Naive thymus-derived CD8-positive, alpha-beta T cell (primary cell): ENCODE measurements at regions of chr14 and their contacts with region 1.

Region 1: GRCh38 chr14:35404449-35405303 is at the start of gene NFKBIA:
- DNase-seq: peak; percentile 88 to 96 (median 92)
- ATAC-seq: peak; percentile 62 to 65
- H3K4me3 Mint-ChIP-seq: peak within 1 kb of the TSS; percentile 91 to 98 (median 94)
- H3K27ac Mint-ChIP-seq: peak within 1 kb of the TSS; percentile 95 to 100 (median 99)
- H3K4me1 Mint-ChIP-seq: peaks cover 32 to 64% (median 57%) of the 10 kb centered on the region in 4 donors
- H3K27me3 Mint-ChIP-seq: no peaks in the 10 kb centered on the region
- polyA plus RNA-seq, gene NFKBIA: 194 to 328 (median 198) TPM

Region 2: GRCh38 chr14:34982417-34983147 is 422.1 kb before region 1 on chr14 and contains the start of gene SRP54:
- POLR2A ChIA-PET with region 1: interaction called, 20 read pairs
- DNase-seq: peak; percentile 96 to 100 (median 100)
- ATAC-seq: peak; percentile 92
- H3K4me3 Mint-ChIP-seq: no peak within 1 kb of the TSS
- H3K27ac Mint-ChIP-seq: no peak within 1 kb of the TSS
- H3K4me1 Mint-ChIP-seq: peaks cover 15 to 28% (median 17%) of the 10 kb centered on the region in 4 donors
- H3K27me3 Mint-ChIP-seq: no peaks in the 10 kb centered on the region
- polyA plus RNA-seq, gene SRP54: 18.3 to 32.2 (median 30.6) TPM

Region 3: DNA sequence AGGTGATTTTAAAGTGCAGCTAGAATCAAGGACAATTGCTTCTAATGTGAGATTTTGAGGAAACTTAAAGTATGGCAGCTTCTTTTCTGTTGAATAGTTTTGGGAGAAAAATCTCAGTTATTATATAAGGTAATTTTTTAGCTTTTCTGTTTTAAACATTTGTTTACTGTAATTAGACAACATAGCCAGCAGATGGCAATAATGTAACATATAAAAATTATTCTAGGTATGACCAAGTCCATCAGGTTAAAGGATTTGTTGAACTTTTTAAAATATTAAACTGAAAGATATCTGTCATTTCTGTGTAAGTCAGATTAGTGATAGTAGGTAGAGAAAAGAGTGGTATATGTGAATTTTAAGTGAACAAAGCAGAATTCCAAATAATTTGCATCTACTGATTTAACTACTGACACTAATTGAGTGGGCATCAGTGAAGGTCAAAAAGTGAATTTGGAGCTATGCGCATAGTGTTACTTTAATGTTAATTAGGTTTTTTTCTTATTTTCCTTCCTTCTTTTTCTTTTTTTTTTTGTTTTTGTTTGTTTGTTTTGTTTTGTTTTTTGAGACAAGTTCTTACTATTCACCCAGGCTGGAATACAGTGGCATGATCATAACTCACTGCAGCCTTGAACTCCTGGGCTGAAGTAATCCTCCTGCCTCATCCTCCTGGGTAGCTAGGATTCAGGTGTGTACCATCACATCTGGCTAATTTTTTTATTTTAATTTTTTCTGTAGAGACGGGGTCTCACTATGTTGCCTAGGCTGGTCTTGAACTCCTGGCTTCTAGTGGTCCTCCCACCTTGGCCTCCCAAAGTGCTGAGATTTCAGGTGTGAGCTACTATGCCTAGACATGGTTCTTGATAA is 263.7 kb before region 1 on chr14:
- POLR2A ChIA-PET with region 1: interaction called, 12 read pairs
- DNase-seq: peak in 3 of 10 donors; percentile 53 to 57 (median 54)
- ATAC-seq: no peak
- H3K4me3 Mint-ChIP-seq: no peak overlapping the region
- H3K27ac Mint-ChIP-seq: peak overlapping the region in 7 of 10 donors; percentile 15 to 74 (median 63)
- H3K4me1 Mint-ChIP-seq: peaks cover under 1 to 16% (median 7%) of the 10 kb centered on the region in 4 donors
- H3K27me3 Mint-ChIP-seq: no peaks in the 10 kb centered on the region

Region 4: GRCh38 chr14:35292051-35292769 is 112.5 kb before region 1 on chr14 and contains the start of gene PSMA6:
- POLR2A ChIA-PET with region 1: interaction called, 162 read pairs
- DNase-seq: peak; percentile 94 to 100 (median 99)
- ATAC-seq: peak; percentile 93 to 94
- H3K4me3 Mint-ChIP-seq: peak within 1 kb of the TSS; percentile 95 to 98 (median 98)
- H3K27ac Mint-ChIP-seq: peak within 1 kb of the TSS; percentile 94 to 99 (median 98)
- H3K4me1 Mint-ChIP-seq: peaks cover 8 to 60% (median 46%) of the 10 kb centered on the region in 4 donors
- H3K27me3 Mint-ChIP-seq: no peaks in the 10 kb centered on the region
- polyA plus RNA-seq, gene PSMA6: 256 to 378 (median 273) TPM

Region 5: GRCh38 chr14:35331605-35332516 is 72.8 kb before region 1 on chr14:
- POLR2A ChIA-PET with region 1: interaction called, 64 read pairs
- DNase-seq: no peak
- ATAC-seq: no peak
- H3K4me3 Mint-ChIP-seq: peak overlapping the region in 1 of 10 donors; percentile 37
- H3K27ac Mint-ChIP-seq: peak overlapping the region; percentile 89 to 96 (median 93)
- H3K4me1 Mint-ChIP-seq: peaks cover 16 to 38% (median 30%) of the 10 kb centered on the region in 4 donors
- H3K27me3 Mint-ChIP-seq: no peaks in the 10 kb centered on the region

Region 6: DNA sequence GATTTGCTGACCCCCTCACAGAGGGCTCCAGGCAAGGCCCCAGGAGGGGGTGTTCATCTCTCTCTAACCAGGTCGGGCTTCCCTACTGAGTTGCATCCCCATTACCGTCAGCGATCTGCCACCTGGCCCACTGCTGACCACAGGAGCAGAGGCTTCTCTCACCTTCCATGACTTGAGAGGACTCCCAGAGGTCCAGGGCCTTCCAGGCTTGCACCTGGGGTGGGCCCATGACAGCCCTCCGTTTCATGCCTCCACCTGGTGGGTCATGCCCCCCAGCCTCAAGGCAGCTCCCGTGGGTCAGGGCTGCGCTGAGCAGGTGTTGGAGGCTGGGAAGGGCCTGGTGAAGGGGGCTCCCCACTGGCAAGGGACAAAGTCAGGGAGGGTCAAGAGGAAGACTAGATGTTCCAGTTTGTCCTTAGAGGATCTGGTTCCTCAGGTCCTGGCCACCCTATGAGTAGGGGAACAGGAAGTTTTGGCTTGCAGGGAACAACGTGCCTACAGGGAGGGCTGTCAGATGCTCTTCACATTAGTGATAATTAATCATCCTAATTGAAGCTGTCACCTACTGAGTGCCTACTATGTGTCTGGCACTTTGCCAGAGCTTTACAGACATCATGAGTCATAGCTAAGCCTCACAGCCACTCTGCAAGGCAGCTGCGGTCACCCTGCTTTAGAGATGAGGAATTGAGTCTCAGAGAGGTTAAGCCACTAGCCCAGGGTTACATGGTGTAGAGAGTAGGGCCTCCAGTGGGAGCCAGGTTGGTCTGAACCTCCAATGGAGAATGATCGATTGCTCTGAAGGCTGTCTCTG is 13.9 kb before region 1 on chr14:
- POLR2A ChIA-PET with region 1: interaction called, 23 read pairs
- DNase-seq: no peak
- ATAC-seq: no peak
- H3K4me3 Mint-ChIP-seq: no peak overlapping the region
- H3K27ac Mint-ChIP-seq: peak overlapping the region in 3 of 10 donors; percentile 35 to 59 (median 53)
- H3K4me1 Mint-ChIP-seq: peaks cover 0 to 6% (median 2%) of the 10 kb centered on the region in 4 donors
- H3K27me3 Mint-ChIP-seq: no peaks in the 10 kb centered on the region